Activated naive CD4-positive, alpha-beta T cell treated with anti-CD3 and anti-CD28 coated beads for 36 hours (primary cell): ENCODE measurements at regions of chr18 and their contacts with region 1.

Region 1: DNA sequence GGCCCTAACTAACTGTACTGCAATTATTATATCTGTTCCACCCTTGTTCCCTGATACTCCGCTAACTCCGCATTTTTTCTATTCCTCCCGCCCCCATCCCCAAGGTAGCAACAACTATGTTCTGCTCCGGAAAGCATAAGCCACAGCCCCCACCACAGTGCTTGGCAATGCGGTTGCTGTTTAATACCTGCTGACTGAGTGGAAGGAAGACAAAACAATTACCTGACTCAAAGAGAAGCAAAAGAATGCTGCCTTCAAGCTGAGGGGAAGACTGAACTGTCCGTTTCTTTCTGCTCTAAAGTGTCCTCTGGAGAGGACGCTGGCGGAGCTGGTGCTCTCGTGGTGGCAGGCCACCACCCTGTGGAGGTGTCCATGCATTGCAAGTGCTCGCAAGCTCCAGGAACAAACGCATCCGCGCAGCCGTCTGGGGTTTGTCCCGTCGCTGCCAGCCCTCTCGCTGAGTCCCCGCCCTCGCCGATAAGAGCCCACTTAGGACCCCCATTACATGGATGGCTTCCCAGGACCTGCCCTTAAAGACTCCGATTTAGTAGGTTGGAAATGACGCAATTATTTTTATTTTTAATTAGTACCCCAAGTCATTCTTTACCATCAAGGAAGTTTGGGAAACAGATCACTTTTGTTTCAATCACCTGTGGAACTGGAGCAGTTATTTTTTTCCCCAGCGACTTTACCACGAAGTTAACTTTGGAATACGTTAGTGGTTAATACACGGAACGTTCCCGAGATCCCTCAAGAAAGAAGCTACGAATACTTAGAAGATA is 1.6 kb upstream of the MYL12A start:
- DNase-seq: peak; percentile 91
- H3K4me3 Mint-ChIP-seq: peak overlapping the region; percentile 90
- H3K27ac Mint-ChIP-seq: peak overlapping the region; percentile 92
- H3K4me1 Mint-ChIP-seq: peaks cover 23% of the 10 kb centered on the region
- H3K27me3 Mint-ChIP-seq: no peaks in the 10 kb centered on the region

Region 2: GRCh38 chr18:2641638-2642037 is 604.4 kb before region 1 on chr18:
- CTCF ChIA-PET with region 1: no interaction called
- intact Hi-C with region 1: loop called (anchors 1 kb)
- DNase-seq: no peak
- H3K4me3 Mint-ChIP-seq: peak overlapping the region; percentile 23
- H3K27ac Mint-ChIP-seq: peak overlapping the region; percentile 86
- H3K4me1 Mint-ChIP-seq: peaks cover 52% of the 10 kb centered on the region
- H3K27me3 Mint-ChIP-seq: no peaks in the 10 kb centered on the region

Region 3: DNA sequence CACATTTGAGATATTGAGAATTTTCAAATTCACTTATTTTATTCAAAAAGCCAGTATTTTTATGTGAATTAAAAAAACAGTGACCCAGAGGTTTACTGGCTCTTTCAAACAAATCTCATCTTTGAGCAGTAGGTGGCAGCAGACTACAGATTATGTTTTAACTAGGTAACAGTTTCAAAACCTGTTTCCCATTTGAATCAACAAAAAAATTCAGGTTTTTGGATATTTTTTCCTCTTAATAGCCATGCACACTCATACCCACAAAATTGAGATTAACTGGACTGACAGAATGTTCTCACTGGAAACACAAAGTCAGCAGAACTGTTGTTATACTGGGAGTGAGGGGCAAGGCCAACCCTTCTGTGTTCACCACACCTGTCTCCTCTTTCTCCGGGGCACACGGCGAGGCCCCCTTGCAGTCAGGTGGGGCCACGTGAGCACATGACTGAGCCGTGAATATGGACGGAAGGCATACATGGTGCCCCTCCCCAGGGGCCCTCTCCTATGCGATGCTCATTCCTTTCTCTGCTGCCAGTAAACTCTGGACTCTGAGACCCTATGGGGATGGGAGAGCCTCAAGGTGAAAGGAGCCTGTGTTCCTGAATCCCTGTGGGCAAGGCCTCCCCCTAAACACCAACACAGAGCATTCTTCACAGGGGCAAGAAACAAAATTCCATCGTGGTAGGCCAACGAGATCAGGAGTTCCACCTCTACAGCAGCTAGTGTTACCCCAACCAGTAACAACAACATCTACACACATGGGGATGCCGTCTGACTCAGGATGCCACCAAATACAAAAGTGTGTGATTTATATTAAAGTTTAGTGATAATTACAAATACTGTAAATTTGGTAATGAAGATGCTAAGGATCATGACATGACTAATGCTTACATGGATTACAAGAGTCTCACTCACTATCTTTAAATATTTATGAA is 313.5 kb before region 1 on chr18:
- CTCF ChIA-PET with region 1: interaction called, 6 read pairs
- intact Hi-C with region 1: loop called (anchors 1 kb)
- DNase-seq: peak; percentile 68
- H3K4me3 Mint-ChIP-seq: no peak overlapping the region
- H3K27ac Mint-ChIP-seq: peak overlapping the region; percentile 94
- H3K4me1 Mint-ChIP-seq: peaks cover 35% of the 10 kb centered on the region
- H3K27me3 Mint-ChIP-seq: no peaks in the 10 kb centered on the region

Region 4: GRCh38 chr18:3012964-3013804 is 232.9 kb before region 1 on chr18 and contains the start of gene LPIN2:
- CTCF ChIA-PET with region 1: interaction called, 3 read pairs
- intact Hi-C with region 1: loop called (anchors 1 kb)
- DNase-seq: peak; percentile 97
- H3K4me3 Mint-ChIP-seq: peak within 1 kb of the TSS; percentile 84
- H3K27ac Mint-ChIP-seq: peak within 1 kb of the TSS; percentile 92
- H3K4me1 Mint-ChIP-seq: peaks cover 68% of the 10 kb centered on the region
- H3K27me3 Mint-ChIP-seq: no peaks in the 10 kb centered on the region
- total RNA-seq, gene LPIN2: 62.4 to 65.7 TPM

Region 5: DNA sequence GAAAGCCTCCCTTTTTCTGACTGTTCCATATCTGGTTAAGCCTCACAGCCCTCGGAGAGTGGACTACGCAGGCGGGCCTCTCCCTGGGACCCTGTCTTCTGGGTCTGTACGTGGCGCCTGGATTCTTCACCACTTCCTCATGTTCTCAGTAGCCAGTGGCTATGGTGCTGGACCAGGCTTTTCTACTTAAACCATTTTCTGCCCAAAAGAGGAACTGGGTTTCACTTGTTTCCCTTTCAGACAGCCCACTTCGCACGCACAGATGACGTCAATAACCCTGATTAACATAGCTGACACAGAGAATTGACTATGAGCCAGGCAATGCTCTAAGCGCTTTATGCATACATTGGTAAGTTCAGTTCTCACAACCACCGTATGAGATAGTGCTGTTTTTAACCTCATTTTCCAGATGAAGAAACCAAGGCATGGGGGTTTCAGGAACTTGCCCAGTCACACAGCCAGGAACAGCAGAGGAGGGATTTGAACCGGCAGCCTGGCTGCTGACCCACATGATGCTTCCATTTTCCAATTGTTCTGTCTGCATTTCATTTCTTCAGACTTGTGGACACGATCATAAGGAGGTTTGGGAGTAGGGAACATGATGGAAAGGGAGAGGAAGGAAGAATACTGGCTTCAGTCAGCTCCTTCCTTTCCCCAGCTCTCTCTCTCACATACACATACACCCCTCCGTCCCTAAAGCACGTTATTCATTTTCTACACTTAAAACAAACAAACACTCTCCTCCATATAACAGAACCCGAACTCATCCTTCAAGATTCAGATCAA is 67.9 kb before region 1 on chr18:
- CTCF ChIA-PET with region 1: interaction called, 6 read pairs
- intact Hi-C with region 1: loop called (anchors 2 kb)
- DNase-seq: peak; percentile 29
- H3K4me3 Mint-ChIP-seq: no peak overlapping the region
- H3K27ac Mint-ChIP-seq: no peak overlapping the region
- H3K4me1 Mint-ChIP-seq: no peaks in the 10 kb centered on the region
- H3K27me3 Mint-ChIP-seq: no peaks in the 10 kb centered on the region

Region 6: GRCh38 chr18:3447895-3448837 is 202.1 kb after region 1 on chr18:
- CTCF ChIA-PET with region 1: interaction called, 3 read pairs
- intact Hi-C with region 1: loop called (anchors 1 kb)
- DNase-seq: peak; percentile 90
- H3K4me3 Mint-ChIP-seq: peak overlapping the region; percentile 89
- H3K27ac Mint-ChIP-seq: peak overlapping the region; percentile 98
- H3K4me1 Mint-ChIP-seq: peaks cover 30% of the 10 kb centered on the region
- H3K27me3 Mint-ChIP-seq: no peaks in the 10 kb centered on the region